ENCODE measurements at regions of chr18 and their contacts with region 1.

Region 1: DNA sequence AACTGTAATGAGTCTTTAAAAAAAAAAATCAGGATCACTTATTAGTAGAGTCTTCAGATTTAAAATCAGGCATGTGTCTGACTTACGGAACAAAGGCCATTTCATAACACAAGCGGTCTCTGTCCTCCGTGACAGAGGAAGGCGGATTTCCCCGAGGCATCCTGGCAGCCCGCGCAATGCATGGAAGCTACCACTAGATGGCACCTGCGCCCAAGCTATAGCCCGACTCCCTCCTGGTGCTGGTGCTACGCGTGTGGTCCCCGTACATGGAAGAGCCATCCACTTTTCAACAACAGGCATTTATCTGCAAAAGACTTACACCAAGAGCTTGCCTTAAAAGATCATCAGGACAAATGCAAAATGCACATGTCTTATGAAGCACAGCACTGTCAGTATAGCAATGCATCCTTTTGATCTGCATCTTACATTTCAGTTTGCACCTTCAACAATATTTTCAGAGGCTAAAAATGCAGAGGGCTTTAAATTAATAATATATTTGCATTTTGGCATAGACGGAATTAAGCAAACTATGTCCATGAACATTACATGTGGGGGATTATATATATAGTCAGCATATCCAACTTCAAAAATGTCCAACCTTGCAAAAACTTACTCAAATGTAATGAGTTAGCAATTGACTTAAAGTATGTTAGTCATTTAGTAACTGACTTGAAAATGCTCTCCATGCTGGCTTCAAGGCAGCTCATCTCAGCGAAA is 96.0 kb downstream of the ZNF516 start:
- DNase-seq: peak; percentile 77 to 92 (median 83)
- ATAC-seq: peak; percentile 82 to 94 (median 92)
- H3K4me3 ChIP-seq: no peak overlapping the region
- H3K27ac ChIP-seq: peak overlapping the region in 1 of 12 donors; percentile 18
- H3K4me1 ChIP-seq: peaks cover 0 to 20% (median 3%) of the 10 kb centered on the region in 12 donors
- H3K27me3 ChIP-seq: no peaks in the 10 kb centered on the region
- CTCF ChIP-seq: peak; percentile 90 to 99 (median 93)
- POLR2A ChIP-seq: no peak

Region 2: DNA sequence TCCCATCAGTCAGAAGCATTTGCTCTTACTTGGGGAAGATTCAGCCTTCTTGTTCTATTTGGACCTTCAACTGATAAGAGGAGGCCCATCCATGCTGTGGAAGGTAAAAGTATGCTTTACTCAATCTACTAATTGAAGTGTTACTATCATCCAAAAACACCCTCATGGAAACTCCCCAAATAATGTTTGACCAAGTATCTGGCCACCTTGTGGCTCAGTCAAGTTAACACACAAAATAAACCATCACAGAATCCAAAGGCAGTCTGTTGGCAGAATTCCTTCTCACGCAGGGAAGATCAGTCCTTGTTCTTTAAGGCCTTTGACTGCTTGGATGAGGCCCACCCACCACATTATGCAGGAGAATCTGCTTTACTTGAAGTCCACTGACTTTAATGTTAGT is 440.4 kb before region 1 on chr18:
- intact Hi-C with region 1: no loop called
- DNase-seq: no peak
- ATAC-seq: no peak
- H3K4me3 ChIP-seq: no peak overlapping the region
- H3K27ac ChIP-seq: no peak overlapping the region
- H3K4me1 ChIP-seq: no peaks in the 10 kb centered on the region
- H3K27me3 ChIP-seq: no peaks in the 10 kb centered on the region
- CTCF ChIP-seq: no peak
- POLR2A ChIP-seq: no peak

Region 3: DNA sequence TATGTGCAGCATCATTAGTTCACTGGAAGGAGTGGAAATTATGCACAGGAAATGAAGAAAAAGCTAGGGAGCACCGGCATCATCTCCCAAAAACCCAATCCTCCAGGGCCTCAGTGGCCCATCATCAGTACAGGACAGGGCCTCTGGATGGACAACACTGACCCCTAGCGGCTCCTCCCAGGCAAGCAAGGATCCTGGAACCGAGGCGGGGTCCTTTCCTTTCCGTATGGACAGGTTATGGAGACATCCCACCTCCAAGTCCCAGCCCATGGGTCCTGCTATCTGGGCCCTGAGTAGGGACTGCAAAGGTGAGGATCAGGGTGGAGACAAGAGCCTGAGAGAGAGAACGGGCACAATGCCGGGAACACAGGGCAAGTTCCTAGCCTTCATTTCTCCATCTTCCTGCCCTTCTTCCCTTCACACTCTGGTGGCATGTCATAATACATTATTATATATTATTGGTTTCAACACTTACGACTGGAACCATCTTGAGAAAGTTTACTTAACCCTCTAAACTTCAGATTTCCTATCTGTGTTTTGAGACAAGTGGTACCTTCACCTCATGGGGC is 27.8 kb after region 1 on chr18:
- intact Hi-C with region 1: loop called in 1 of 10 experiments (anchors 1 kb)
- DNase-seq: no peak
- ATAC-seq: peak in 3 of 4 donors; percentile 47 to 70 (median 51)
- H3K4me3 ChIP-seq: no peak overlapping the region
- H3K27ac ChIP-seq: no peak overlapping the region
- H3K4me1 ChIP-seq: peaks cover 0 to 32% (median 15%) of the 10 kb centered on the region in 12 donors
- H3K27me3 ChIP-seq: no peaks in the 10 kb centered on the region
- CTCF ChIP-seq: peak; percentile 43 to 74 (median 56)
- POLR2A ChIP-seq: no peak

Region 4: DNA sequence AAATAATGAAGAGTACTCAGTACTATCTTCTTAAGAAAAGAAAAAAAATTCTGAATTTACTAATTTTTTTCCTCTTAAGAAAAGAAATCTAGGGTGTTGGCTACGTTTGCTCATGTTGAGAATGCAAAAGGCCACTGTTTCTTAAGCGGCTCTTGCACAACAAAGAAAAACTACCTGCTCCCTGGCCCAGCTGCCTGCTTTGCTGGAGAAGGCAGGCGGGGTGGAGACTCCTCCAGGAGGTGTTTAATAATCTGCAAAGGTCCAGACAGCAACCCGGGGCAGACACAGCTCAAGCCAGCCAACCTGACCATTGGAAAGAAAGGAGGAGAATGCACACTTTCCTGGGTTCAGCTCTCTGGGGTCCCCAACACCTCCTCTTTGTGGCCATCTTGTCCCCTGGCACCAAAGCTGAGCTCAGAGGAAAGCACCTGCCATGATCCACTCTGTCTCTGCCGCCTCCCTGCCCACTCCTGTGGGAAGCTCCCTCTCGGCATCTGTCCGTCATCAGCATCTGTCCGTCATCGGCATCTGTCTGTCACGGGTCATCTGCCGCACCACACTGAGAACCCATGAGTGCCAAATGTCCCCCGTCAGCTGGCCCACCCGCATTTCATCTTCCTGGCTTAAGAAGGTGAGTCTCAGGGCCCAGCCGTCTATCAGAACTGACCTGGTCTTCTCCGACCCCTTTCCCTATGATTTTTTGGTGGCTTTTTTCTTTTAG is 84.1 kb after region 1 on chr18:
- intact Hi-C with region 1: no loop called
- DNase-seq: no peak
- ATAC-seq: no peak
- H3K4me3 ChIP-seq: no peak overlapping the region
- H3K27ac ChIP-seq: no peak overlapping the region
- H3K4me1 ChIP-seq: peaks cover 0 to 47% (median 6%) of the 10 kb centered on the region in 12 donors
- H3K27me3 ChIP-seq: no peaks in the 10 kb centered on the region
- CTCF ChIP-seq: no peak
- POLR2A ChIP-seq: no peak

Region 5: GRCh38 chr18:76620321-76621170 is 221.5 kb after region 1 on chr18:
- intact Hi-C with region 1: loop called (anchors 2 to 5 kb)
- DNase-seq: peak; percentile 53 to 80 (median 66)
- ATAC-seq: peak; percentile 69 to 86 (median 84)
- H3K4me3 ChIP-seq: peak overlapping the region in 11 of 12 donors; percentile 10 to 63 (median 48)
- H3K27ac ChIP-seq: peak overlapping the region in 10 of 12 donors; percentile 38 to 74 (median 67)
- H3K4me1 ChIP-seq: peaks cover 0 to 25% (median 14%) of the 10 kb centered on the region in 12 donors
- H3K27me3 ChIP-seq: no peaks in the 10 kb centered on the region
- CTCF ChIP-seq: peak; percentile 41 to 74 (median 60)
- POLR2A ChIP-seq: no peak

Region 6: DNA sequence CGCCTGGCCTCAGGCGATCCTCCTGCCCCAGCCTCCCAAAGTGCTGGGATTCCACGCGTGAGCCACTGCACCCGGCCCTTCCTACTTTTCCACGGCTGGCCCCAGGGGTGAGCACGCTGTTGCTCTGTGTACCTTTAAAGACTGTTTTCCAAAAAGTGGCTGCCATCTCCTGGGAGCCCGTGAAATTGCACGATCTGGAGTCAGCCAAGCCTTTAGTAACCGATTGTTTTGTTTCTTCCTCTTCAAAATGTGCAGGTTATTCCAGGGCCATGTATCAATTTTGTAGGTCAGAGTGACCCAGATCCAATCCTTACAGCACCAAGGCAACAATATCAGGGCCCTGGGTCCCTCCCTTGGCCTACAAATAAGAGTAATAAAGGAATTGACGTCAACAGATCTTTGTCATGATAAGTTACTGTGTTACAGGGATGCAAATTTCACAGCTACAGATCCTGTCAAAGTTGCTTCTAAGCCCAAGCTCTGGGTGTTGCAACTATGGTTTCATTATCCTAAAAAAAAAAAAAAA is 287.7 kb after region 1 on chr18:
- intact Hi-C with region 1: loop called (anchors 1 to 5 kb)
- DNase-seq: peak in 4 of 5 donors; percentile 44 to 61 (median 54)
- ATAC-seq: peak; percentile 79 to 89 (median 86)
- H3K4me3 ChIP-seq: no peak overlapping the region
- H3K27ac ChIP-seq: peak overlapping the region in 4 of 12 donors; percentile 15 to 64 (median 39)
- H3K4me1 ChIP-seq: peaks cover 0 to 12% (median 0%) of the 10 kb centered on the region in 12 donors
- H3K27me3 ChIP-seq: peaks cover 0 to 36% (median 11%) of the 10 kb centered on the region in 9 donors
- CTCF ChIP-seq: peak; percentile 43 to 78 (median 60)
- POLR2A ChIP-seq: no peak

Region 7: GRCh38 chr18:76709659-76710645 is 310.9 kb after region 1 on chr18:
- intact Hi-C with region 1: loop called (anchors 1 to 5 kb)
- DNase-seq: peak; percentile 41 to 79 (median 64)
- ATAC-seq: peak; percentile 61 to 91 (median 83)
- H3K4me3 ChIP-seq: peak overlapping the region in 2 of 12 donors; percentile 7 to 22
- H3K27ac ChIP-seq: no peak overlapping the region
- H3K4me1 ChIP-seq: peaks cover 0 to 7% (median 0%) of the 10 kb centered on the region in 12 donors
- H3K27me3 ChIP-seq: no peaks in the 10 kb centered on the region
- CTCF ChIP-seq: peak; percentile 84 to 94 (median 90)
- POLR2A ChIP-seq: no peak